Activated CD8-positive, alpha-beta memory T cell treated with anti-CD3 and anti-CD28 coated beads, Interleukin-2, amount 10 ng/mL, durations not matched to agents 7 days and 5 days (primary cell): ENCODE measurements at regions of chr14 and their contacts with region 1.

Region 1: GRCh38 chr14:69260861-69261564 is 1.1 kb downstream of the GALNT16 start:
- DNase-seq: peak; percentile 48
- ATAC-seq: peak; percentile 76
- H3K4me3 Mint-ChIP-seq: peak overlapping the region; percentile 41
- H3K27ac Mint-ChIP-seq: no peak overlapping the region
- H3K4me1 Mint-ChIP-seq: peaks cover 6% of the 10 kb centered on the region
- H3K27me3 Mint-ChIP-seq: peaks cover 73% of the 10 kb centered on the region

Region 2: GRCh38 chr14:69242311-69243224 is 18.4 kb before region 1 on chr14:
- CTCF ChIA-PET with region 1: interaction called, 11 read pairs
- DNase-seq: peak; percentile 68
- ATAC-seq: peak; percentile 77
- H3K4me3 Mint-ChIP-seq: no peak overlapping the region
- H3K27ac Mint-ChIP-seq: no peak overlapping the region
- H3K4me1 Mint-ChIP-seq: peaks cover 2% of the 10 kb centered on the region
- H3K27me3 Mint-ChIP-seq: no peaks in the 10 kb centered on the region